GM13977 (cell line): ENCODE measurements at regions of chr20 and their contacts with region 1.

Region 1: DNA sequence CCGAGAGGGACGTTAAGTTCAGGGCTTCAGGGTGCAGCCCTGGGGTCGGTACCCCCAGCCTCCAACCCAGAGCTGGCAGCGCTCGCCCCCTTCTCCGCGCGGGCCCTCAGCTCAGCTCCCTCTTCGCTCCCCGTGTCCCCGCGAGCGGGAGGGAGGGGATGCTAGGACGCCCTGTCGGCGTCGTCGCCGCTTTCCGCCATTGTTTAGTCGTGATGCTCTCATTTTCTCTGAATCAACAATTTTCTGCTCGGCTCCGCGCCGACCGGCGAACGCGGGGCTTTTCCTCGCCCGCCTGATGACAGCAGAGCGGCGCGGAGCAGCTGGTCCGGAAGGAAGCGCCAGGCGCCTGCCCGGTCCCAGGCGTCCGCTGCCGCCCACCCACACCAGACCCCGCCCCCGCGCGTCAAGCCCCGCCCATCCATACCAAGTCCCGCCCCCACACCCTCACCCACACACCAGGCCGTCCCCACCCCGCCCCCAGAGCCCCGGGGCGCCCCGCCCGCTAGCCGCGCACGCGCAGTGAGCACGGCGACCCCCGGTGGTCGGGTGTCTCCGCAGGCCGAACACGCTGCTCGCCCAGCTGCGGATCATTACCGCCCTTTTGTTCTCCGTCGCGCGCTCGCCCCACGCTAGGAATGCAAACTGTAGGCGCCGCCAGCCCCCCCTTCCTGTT is 50.1 kb upstream of the SLC32A1 start:
- DNase-seq: peak; percentile 90
- CTCF ChIP-seq: no peak

Region 2: DNA sequence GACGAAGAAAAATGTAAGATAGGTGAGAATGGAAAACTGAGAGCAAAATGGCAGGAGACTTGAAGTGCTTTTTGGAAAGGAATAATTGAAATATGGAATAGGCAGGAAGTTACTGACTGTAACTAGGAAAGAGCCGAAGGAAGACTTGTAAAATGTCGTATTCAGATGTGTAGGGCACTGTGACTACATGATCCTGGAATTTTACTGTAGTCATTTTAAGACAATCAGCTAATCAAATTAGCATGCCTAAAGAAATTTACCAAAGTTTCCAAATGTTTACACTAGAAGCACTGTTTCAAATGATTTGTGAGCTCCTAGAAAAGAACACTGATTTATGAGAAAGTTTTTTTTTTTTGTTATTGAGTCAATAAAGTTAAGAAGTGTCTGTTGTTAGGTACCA is 114.5 kb before region 1 on chr20:
- in situ Hi-C with region 1: no loop called
- DNase-seq: no peak
- CTCF ChIP-seq: no peak

Region 3: DNA sequence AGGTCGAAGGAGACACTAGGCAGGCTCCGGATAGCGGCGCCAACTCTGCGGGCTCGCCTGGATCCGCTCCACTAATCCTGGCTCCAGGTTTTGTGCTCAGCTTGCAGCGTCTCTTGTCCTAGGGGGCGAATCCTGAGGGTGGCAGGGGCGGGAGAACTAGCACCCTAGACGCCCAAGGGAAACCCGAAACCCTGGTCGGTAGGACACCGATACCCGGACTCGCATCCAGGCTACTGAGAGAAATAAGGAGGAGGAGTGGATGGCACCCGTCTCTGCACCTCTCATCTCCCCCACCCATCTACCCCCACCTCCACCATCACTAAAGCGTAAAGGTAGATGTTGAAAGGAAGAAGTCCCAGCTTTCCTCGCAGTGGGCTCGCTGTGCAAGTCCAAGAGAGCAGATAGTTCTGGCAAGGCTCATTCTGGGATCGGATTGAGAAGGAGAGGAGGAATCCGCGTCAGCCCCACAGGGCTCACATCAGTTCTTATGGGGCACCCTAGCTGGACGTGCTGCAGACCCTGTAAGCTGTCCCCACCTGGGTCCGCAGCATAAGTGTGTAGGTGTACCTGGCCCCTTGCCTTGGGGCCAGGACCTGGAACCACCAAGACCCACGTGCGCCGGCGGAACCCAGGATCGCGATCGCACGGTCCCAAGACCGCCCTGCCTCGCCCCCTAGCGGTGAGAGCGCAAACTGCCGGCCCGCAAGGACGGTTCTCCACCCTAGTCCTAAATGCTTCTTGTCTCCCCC is 56.9 kb after region 1 on chr20:
- in situ Hi-C with region 1: no loop called
- DNase-seq: peak; percentile 85
- CTCF ChIP-seq: peak; percentile 99

Region 4: GRCh38 chr20:38907918-38908677 is 233.9 kb after region 1 on chr20:
- in situ Hi-C with region 1: loop called (anchors 25 kb)
- DNase-seq: no peak
- CTCF ChIP-seq: no peak